Activated CD8-positive, alpha-beta T cell treated with anti-CD3 and anti-CD28 coated beads for 36 hours (primary cell): ENCODE measurements at regions of chrX and their contacts with region 1.

Region 1: GRCh38 chrX:112678831-112679230 is 907 bp downstream of the LHFPL1 start:
- DNase-seq: no peak
- ATAC-seq: peak; percentile 66
- H3K4me3 Mint-ChIP-seq: peak overlapping the region; percentile 74
- H3K27ac Mint-ChIP-seq: peak overlapping the region; percentile 88
- H3K4me1 Mint-ChIP-seq: peaks cover 41% of the 10 kb centered on the region
- H3K27me3 Mint-ChIP-seq: no peaks in the 10 kb centered on the region
- CTCF ChIP-seq: no peak

Region 2: DNA sequence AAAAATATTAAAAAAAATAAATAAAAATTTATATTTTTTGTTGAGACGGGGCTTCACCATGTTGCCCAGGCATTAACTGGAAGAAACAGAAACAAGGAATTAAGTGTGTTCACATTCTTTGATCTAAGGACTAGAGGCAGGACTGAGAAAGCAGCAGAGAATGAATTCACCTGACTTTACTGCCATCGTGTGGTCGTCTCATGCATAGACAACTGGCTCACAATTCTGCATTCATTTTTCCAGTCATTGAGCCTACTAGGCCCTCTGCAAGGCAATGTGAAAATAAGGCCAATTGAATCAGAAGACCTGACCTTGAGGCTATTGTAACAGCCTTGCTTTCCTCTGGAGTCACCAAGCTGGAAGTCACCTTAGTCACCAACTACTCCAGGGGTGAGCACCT is 36.5 kb before region 1 on chrX:
- CTCF ChIA-PET with region 1: interaction called, 7 read pairs
- POLR2A ChIA-PET with region 1: no interaction called
- intact Hi-C with region 1: loop called (anchors 5 kb)
- DNase-seq: peak; percentile 31
- ATAC-seq: peak; percentile 60
- H3K4me3 Mint-ChIP-seq: no peak overlapping the region
- H3K27ac Mint-ChIP-seq: no peak overlapping the region
- H3K4me1 Mint-ChIP-seq: peaks cover 29% of the 10 kb centered on the region
- H3K27me3 Mint-ChIP-seq: no peaks in the 10 kb centered on the region
- CTCF ChIP-seq: no peak

Region 3: GRCh38 chrX:112668476-112669409 is 10.1 kb before region 1 on chrX:
- CTCF ChIA-PET with region 1: no interaction called
- POLR2A ChIA-PET with region 1: no interaction called
- intact Hi-C with region 1: no loop called
- DNase-seq: no peak
- ATAC-seq: no peak
- H3K4me3 Mint-ChIP-seq: no peak overlapping the region
- H3K27ac Mint-ChIP-seq: no peak overlapping the region
- H3K4me1 Mint-ChIP-seq: peaks cover 22% of the 10 kb centered on the region
- H3K27me3 Mint-ChIP-seq: no peaks in the 10 kb centered on the region
- CTCF ChIP-seq: no peak